T-cell (primary cell): ENCODE measurements at regions of chr5 and their contacts with region 1.

Region 1: GRCh38 chr5:43120720-43121564 is at the start of gene ZNF131:
- DNase-seq: peak; percentile 93 to 99 (median 97)
- ATAC-seq: peak; percentile 87 to 92 (median 89)
- H3K4me3 ChIP-seq: peak within 1 kb of the TSS; percentile 78 to 80
- H3K4me3 Mint-ChIP-seq: peak within 1 kb of the TSS; percentile 86 to 92 (median 90)
- H3K27ac ChIP-seq: peak within 1 kb of the TSS; percentile 90
- H3K27ac Mint-ChIP-seq: peak within 1 kb of the TSS; percentile 89 to 91
- H3K4me1 ChIP-seq: peaks cover 25 to 30% of the 10 kb centered on the region in 2 experiments
- H3K4me1 Mint-ChIP-seq: peaks cover 31 to 39% (median 34%) of the 10 kb centered on the region in 3 donors
- H3K27me3 ChIP-seq: no peaks in the 10 kb centered on the region
- H3K27me3 Mint-ChIP-seq: no peaks in the 10 kb centered on the region
- total RNA-seq, gene ZNF131: 62.0 to 71.9 (median 67.5) TPM

Region 2: GRCh38 chr5:42950440-42951292 is 170.3 kb before region 1 on chr5:
- CTCF ChIA-PET with region 1: interaction called in 1 of 2 experiments, 6 read pairs
- POLR2A ChIA-PET with region 1: interaction called, 4 to 13 read pairs
- DNase-seq: peak; percentile 17 to 80 (median 41)
- ATAC-seq: peak; percentile 17 to 58 (median 44)
- H3K4me3 ChIP-seq: peak overlapping the region; percentile 77 to 98
- H3K4me3 Mint-ChIP-seq: peak overlapping the region; percentile 96 to 98 (median 98)
- H3K27ac ChIP-seq: peak overlapping the region; percentile 99
- H3K27ac Mint-ChIP-seq: peak overlapping the region; percentile 100
- H3K4me1 ChIP-seq: peaks cover 15 to 46% of the 10 kb centered on the region in 2 experiments
- H3K4me1 Mint-ChIP-seq: peaks cover 34 to 45% (median 40%) of the 10 kb centered on the region in 3 donors
- H3K27me3 ChIP-seq: no peaks in the 10 kb centered on the region
- H3K27me3 Mint-ChIP-seq: no peaks in the 10 kb centered on the region

Region 3: GRCh38 chr5:43019614-43020293 is 101.2 kb before region 1 on chr5:
- CTCF ChIA-PET with region 1: interaction called in 1 of 2 experiments, 17 read pairs
- POLR2A ChIA-PET with region 1: interaction called in 1 of 2 experiments, 14 read pairs
- DNase-seq: peak; percentile 65 to 95 (median 86)
- ATAC-seq: peak; percentile 67 to 74 (median 70)
- H3K4me3 ChIP-seq: peak overlapping the region; percentile 70 to 92
- H3K4me3 Mint-ChIP-seq: peak overlapping the region; percentile 90 to 98 (median 98)
- H3K27ac ChIP-seq: peak overlapping the region; percentile 98
- H3K27ac Mint-ChIP-seq: peak overlapping the region; percentile 98 to 100
- H3K4me1 ChIP-seq: peaks cover 31 to 35% of the 10 kb centered on the region in 2 experiments
- H3K4me1 Mint-ChIP-seq: peaks cover 41 to 46% (median 42%) of the 10 kb centered on the region in 3 donors
- H3K27me3 ChIP-seq: no peaks in the 10 kb centered on the region
- H3K27me3 Mint-ChIP-seq: no peaks in the 10 kb centered on the region

Region 4: DNA sequence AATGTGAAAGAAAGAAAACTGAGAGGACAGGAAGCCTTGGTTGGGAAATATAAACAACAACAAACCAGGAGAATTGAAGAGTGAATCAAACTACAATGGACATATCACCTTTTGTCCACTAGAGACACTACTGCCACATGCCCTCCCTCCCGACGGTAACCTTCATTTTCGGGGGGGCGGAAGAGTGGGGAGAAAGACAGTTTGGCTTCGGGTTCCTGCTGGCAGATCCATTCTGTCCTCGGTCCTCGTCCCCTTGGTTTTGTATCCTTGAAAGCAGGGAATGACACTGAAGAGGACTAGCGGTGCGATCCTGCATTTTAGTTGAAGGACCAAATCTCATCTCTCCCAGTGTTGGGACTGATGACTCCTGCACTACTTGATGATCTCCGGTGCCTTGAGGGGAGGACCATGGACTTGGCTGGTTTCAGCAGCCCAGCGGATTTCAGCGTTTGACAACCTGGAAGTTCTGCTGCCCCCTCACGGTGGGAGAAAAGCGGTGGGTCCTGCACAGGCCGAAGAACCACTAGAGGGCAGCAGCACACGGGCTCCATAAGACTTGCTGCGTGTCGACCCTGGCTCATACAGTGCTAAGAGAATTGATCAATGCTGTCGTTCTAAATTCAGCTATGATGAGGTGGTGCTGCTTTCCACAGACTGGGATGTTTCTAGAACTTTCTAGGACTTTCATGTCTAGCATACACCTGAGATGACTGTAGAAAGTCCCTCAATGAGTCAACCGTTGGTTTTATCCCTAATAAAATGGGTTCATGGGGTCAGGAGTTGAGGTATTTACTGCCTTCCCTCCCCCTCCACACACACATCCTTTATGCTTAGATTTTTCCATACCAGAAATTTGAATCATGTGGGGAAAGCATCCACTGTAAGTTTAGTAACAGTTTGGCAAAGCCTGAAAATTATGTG is 15.3 kb before region 1 on chr5:
- CTCF ChIA-PET with region 1: interaction called, 21 to 109 read pairs
- POLR2A ChIA-PET with region 1: interaction called, 4 to 11 read pairs
- DNase-seq: peak; percentile 75 to 97 (median 87)
- ATAC-seq: peak; percentile 92 to 97 (median 96)
- H3K4me3 ChIP-seq: peak overlapping the region; percentile 58 to 65
- H3K4me3 Mint-ChIP-seq: peak overlapping the region; percentile 76 to 82 (median 78)
- H3K27ac ChIP-seq: peak overlapping the region; percentile 62
- H3K27ac Mint-ChIP-seq: peak overlapping the region; percentile 75 to 84
- H3K4me1 ChIP-seq: peaks cover 12 to 32% of the 10 kb centered on the region in 2 experiments
- H3K4me1 Mint-ChIP-seq: peaks cover 35 to 44% (median 38%) of the 10 kb centered on the region in 3 donors
- H3K27me3 ChIP-seq: no peaks in the 10 kb centered on the region
- H3K27me3 Mint-ChIP-seq: no peaks in the 10 kb centered on the region

Region 5: GRCh38 chr5:43305948-43306565 is 185.1 kb after region 1 on chr5:
- CTCF ChIA-PET with region 1: interaction called, 10 to 13 read pairs
- POLR2A ChIA-PET with region 1: no interaction called
- DNase-seq: peak in 7 of 35 experiments; percentile 1 to 71 (median 14)
- ATAC-seq: peak; percentile 45 to 78 (median 69)
- H3K4me3 ChIP-seq: no peak overlapping the region
- H3K4me3 Mint-ChIP-seq: no peak overlapping the region
- H3K27ac ChIP-seq: no peak overlapping the region
- H3K27ac Mint-ChIP-seq: peak overlapping the region in 1 of 2 donors; percentile 52
- H3K4me1 ChIP-seq: no peaks in the 10 kb centered on the region
- H3K4me1 Mint-ChIP-seq: peaks cover 43 to 61% (median 57%) of the 10 kb centered on the region in 3 donors
- H3K27me3 ChIP-seq: no peaks in the 10 kb centered on the region
- H3K27me3 Mint-ChIP-seq: no peaks in the 10 kb centered on the region

Region 6: GRCh38 chr5:43484106-43484849 is 363.3 kb after region 1 on chr5:
- CTCF ChIA-PET with region 1: interaction called, 9 to 12 read pairs
- POLR2A ChIA-PET with region 1: interaction called, 4 to 14 read pairs
- DNase-seq: peak; percentile 75 to 91 (median 82)
- ATAC-seq: peak; percentile 73 to 77 (median 76)
- H3K4me3 ChIP-seq: peak overlapping the region; percentile 62 to 88
- H3K4me3 Mint-ChIP-seq: peak overlapping the region; percentile 89 to 99 (median 95)
- H3K27ac ChIP-seq: peak overlapping the region; percentile 93
- H3K27ac Mint-ChIP-seq: peak overlapping the region; percentile 100
- H3K4me1 ChIP-seq: peaks cover 9 to 25% of the 10 kb centered on the region in 2 experiments
- H3K4me1 Mint-ChIP-seq: peaks cover 50 to 55% (median 53%) of the 10 kb centered on the region in 3 donors
- H3K27me3 ChIP-seq: no peaks in the 10 kb centered on the region
- H3K27me3 Mint-ChIP-seq: no peaks in the 10 kb centered on the region